Activated CD4-positive, alpha-beta T cell treated with anti-CD3 and anti-CD28 coated beads for 36 hours (primary cell): ENCODE measurements at regions of chrX and their contacts with region 1.

Region 1: GRCh38 chrX:39331082-39331704 is 529.9 kb downstream of the MID1IP1 start:
- DNase-seq: peak; percentile 65
- ATAC-seq: peak; percentile 77
- H3K4me3 Mint-ChIP-seq: no peak overlapping the region
- H3K27ac Mint-ChIP-seq: peak overlapping the region; percentile 90
- H3K4me1 Mint-ChIP-seq: peaks cover 76% of the 10 kb centered on the region
- H3K27me3 Mint-ChIP-seq: no peaks in the 10 kb centered on the region

Region 2: DNA sequence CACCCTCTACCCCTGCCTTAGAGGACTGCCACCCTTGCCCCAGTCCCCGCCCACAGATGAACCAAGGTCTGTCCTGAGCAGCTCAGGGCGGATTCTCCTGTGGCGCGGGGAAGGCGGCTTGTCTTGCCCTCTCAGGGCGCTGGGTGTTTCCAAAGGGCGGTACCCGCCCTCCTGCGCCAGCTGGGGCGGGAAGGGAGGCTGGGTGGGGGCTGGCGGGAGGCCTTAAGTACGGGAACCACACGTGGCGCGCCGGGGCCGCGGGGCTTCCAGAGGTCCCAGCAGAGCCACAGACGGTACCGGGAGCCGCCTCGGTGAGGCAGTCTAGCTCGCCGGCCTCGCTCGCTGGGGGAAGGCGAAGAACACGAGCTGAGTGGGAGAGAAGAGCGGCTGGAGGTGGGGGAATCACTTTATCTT is 168.9 kb before region 1 on chrX:
- CTCF ChIA-PET with region 1: no interaction called
- POLR2A ChIA-PET with region 1: no interaction called
- intact Hi-C with region 1: loop called in 1 of 2 experiments (anchors 2 kb)
- DNase-seq: peak; percentile 73
- ATAC-seq: peak; percentile 68
- H3K4me3 Mint-ChIP-seq: peak overlapping the region; percentile 53
- H3K27ac Mint-ChIP-seq: peak overlapping the region; percentile 59
- H3K4me1 Mint-ChIP-seq: peaks cover 51% of the 10 kb centered on the region
- H3K27me3 Mint-ChIP-seq: no peaks in the 10 kb centered on the region

Region 3: GRCh38 chrX:39261446-39262147 is 69.6 kb before region 1 on chrX:
- CTCF ChIA-PET with region 1: interaction called, 3 read pairs
- POLR2A ChIA-PET with region 1: interaction called, 6 read pairs
- intact Hi-C with region 1: loop called (anchors 5 kb)
- DNase-seq: peak; percentile 25
- ATAC-seq: peak; percentile 78
- H3K4me3 Mint-ChIP-seq: no peak overlapping the region
- H3K27ac Mint-ChIP-seq: peak overlapping the region; percentile 32
- H3K4me1 Mint-ChIP-seq: peaks cover 52% of the 10 kb centered on the region
- H3K27me3 Mint-ChIP-seq: no peaks in the 10 kb centered on the region

Region 4: DNA sequence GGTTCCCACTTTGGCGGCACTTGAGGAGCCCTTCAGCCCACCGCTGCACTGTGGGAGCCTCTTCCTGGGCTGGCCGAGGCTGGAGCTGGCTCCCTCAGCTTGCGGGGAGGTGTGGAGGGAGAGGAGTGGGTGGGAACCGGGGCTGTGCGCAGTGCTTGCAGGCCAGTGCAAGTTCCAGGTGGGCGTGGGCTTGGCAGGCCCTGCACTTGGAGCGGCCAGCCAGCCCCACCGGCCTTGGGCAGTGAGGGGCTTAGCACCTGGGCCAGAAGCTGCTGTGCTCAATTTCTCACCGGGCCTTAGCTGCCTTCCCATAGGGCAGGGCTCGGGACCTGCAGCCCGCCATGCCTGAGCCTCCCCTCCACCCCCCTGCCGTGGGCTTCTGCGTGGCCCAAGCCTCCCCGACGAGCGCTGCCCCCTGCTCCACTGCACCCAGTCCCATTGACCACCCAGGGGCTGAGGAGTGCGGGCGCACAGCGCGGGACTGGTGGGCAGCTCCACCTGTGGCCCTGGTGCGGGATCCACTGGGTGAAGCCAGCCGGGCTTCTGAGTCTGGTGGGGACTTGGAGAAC is 55.6 kb before region 1 on chrX:
- CTCF ChIA-PET with region 1: no interaction called
- POLR2A ChIA-PET with region 1: no interaction called
- intact Hi-C with region 1: no loop called
- DNase-seq: no peak
- ATAC-seq: no peak
- H3K4me3 Mint-ChIP-seq: no peak overlapping the region
- H3K27ac Mint-ChIP-seq: no peak overlapping the region
- H3K4me1 Mint-ChIP-seq: no peaks in the 10 kb centered on the region
- H3K27me3 Mint-ChIP-seq: no peaks in the 10 kb centered on the region

Region 5: GRCh38 chrX:39427906-39428305 is 96.7 kb after region 1 on chrX:
- CTCF ChIA-PET with region 1: no interaction called
- POLR2A ChIA-PET with region 1: interaction called, 4 read pairs
- intact Hi-C with region 1: loop called (anchors 1 kb)
- DNase-seq: peak; percentile 73
- ATAC-seq: peak; percentile 71
- H3K4me3 Mint-ChIP-seq: no peak overlapping the region
- H3K27ac Mint-ChIP-seq: peak overlapping the region; percentile 82
- H3K4me1 Mint-ChIP-seq: peaks cover 73% of the 10 kb centered on the region
- H3K27me3 Mint-ChIP-seq: no peaks in the 10 kb centered on the region

Region 6: GRCh38 chrX:40169193-40170101 is 838.3 kb after region 1 on chrX:
- CTCF ChIA-PET with region 1: no interaction called
- POLR2A ChIA-PET with region 1: no interaction called
- intact Hi-C with region 1: loop called in 1 of 2 experiments (anchors 5 kb)
- DNase-seq: peak; percentile 89
- ATAC-seq: peak; percentile 67
- H3K4me3 Mint-ChIP-seq: peak overlapping the region; percentile 80
- H3K27ac Mint-ChIP-seq: peak overlapping the region; percentile 90
- H3K4me1 Mint-ChIP-seq: peaks cover 37% of the 10 kb centered on the region
- H3K27me3 Mint-ChIP-seq: no peaks in the 10 kb centered on the region